Activated T-helper 1 cell treated with anti-CD3 and anti-CD28 coated beads, Interleukin-12 subunit alpha, Interleukin-12 subunit beta, Interleukin-2, Interleukin-4 antibody, amounts not matched to agents 30 ng/mL and 10 ng/mL and 1 ng/mL, durations not matched to agents 14 hours and 24 hours and 36 hours (primary cell): ENCODE measurements at regions of chr10 and their contacts with region 1.

Region 1: GRCh38 chr10:62732841-62733653 is 71.5 kb upstream of the ADO start:
- DNase-seq: peak; percentile 64
- H3K4me3 Mint-ChIP-seq: peak overlapping the region; percentile 72
- H3K27ac Mint-ChIP-seq: no peak overlapping the region
- H3K4me1 Mint-ChIP-seq: peaks cover 23% of the 10 kb centered on the region
- H3K27me3 Mint-ChIP-seq: no peaks in the 10 kb centered on the region

Region 2: GRCh38 chr10:61943674-61944410 is 789.2 kb before region 1 on chr10:
- intact Hi-C with region 1: loop called (anchors 5 kb)
- DNase-seq: no peak
- H3K4me3 Mint-ChIP-seq: peak overlapping the region; percentile 77
- H3K27ac Mint-ChIP-seq: peak overlapping the region; percentile 95
- H3K4me1 Mint-ChIP-seq: peaks cover 58% of the 10 kb centered on the region
- H3K27me3 Mint-ChIP-seq: no peaks in the 10 kb centered on the region

Region 3: GRCh38 chr10:62528441-62528840 is 204.6 kb before region 1 on chr10:
- intact Hi-C with region 1: loop called (anchors 1 kb)
- DNase-seq: no peak
- H3K4me3 Mint-ChIP-seq: no peak overlapping the region
- H3K27ac Mint-ChIP-seq: peak overlapping the region; percentile 1
- H3K4me1 Mint-ChIP-seq: peaks cover 33% of the 10 kb centered on the region
- H3K27me3 Mint-ChIP-seq: peaks cover 9% of the 10 kb centered on the region

Region 4: DNA sequence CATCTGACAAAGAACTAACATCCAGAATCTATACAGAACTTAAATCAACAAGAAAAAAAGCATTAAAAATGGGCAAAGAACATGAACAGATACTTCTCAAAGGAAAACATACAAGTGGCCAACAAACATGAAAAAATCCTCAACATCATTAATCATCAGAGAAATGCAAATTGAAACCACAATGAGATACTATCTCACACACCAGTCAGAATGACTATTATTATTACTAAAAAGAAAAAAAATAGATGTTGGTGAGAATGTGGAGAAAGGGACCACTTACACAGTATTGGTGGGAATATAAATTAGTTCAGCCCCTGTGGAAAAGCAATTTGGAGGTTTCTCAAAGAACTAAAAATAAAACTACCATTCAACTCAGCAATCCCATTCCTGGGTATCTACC is 17.7 kb before region 1 on chr10:
- intact Hi-C with region 1: loop called (anchors 2 kb)
- DNase-seq: no peak
- H3K4me3 Mint-ChIP-seq: no peak overlapping the region
- H3K27ac Mint-ChIP-seq: no peak overlapping the region
- H3K4me1 Mint-ChIP-seq: peaks cover 12% of the 10 kb centered on the region
- H3K27me3 Mint-ChIP-seq: peaks cover 5% of the 10 kb centered on the region

Region 5: GRCh38 chr10:62811159-62811875 is 78.3 kb after region 1 on chr10:
- intact Hi-C with region 1: loop called (anchors 1 kb)
- DNase-seq: peak; percentile 71
- H3K4me3 Mint-ChIP-seq: peak overlapping the region; percentile 98
- H3K27ac Mint-ChIP-seq: peak overlapping the region; percentile 94
- H3K4me1 Mint-ChIP-seq: peaks cover 84% of the 10 kb centered on the region
- H3K27me3 Mint-ChIP-seq: peaks cover 8% of the 10 kb centered on the region

Region 6: GRCh38 chr10:63083904-63084689 is 351.1 kb after region 1 on chr10:
- intact Hi-C with region 1: loop called (anchors 5 kb)
- DNase-seq: peak; percentile 14
- H3K4me3 Mint-ChIP-seq: no peak overlapping the region
- H3K27ac Mint-ChIP-seq: no peak overlapping the region
- H3K4me1 Mint-ChIP-seq: peaks cover 12% of the 10 kb centered on the region
- H3K27me3 Mint-ChIP-seq: peaks cover 28% of the 10 kb centered on the region